Naive thymus-derived CD4-positive, alpha-beta T cell (primary cell): ENCODE measurements at regions of chr20 and their contacts with region 1.

Region 1: DNA sequence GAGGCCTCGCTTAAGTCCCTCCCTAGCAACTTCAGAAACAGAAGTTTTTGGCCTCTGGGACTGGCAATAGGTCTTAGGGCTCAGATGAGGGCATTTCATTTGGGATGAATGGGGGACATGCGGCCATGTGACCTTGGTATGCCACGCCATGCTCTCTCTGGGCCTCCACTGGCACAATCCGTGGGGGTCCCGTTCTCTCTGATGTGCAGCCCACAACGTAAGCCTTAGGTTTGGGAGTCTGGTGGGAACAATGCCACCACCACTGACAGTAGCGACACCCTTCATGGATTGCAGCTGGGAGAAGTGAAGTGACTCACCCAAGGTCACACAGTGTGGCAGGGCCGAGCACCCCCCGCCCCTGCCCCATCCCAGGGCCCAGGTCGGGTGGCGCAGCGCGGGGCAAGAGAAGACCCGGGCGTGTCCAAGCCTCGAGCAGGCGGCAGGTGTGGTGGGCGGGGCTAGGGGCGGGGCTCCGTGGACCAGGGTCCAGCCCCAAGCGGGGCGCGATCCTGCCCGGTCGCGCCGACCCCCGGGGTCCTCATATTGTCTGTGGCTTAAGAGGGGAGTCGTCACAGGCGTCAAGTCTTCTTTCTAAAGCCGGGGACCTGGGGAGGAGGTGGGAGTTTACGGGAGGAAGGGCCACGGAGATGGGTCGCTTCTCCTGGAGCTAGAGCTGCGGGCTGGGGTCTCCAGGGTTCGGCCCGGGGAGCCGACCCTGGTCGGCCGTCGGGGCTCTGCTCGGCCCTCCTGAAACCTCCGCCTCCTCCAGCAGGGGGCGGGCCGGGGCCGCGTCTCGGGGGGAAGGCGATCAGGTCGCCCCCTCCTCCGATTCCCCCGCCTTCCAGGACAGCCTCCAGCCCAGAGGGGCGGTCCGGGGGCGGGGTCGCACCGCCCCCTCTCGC is 698 bp upstream of the CEBPB start:
- DNase-seq: peak; percentile 73 to 92 (median 85)
- ATAC-seq: peak; percentile 84
- H3K4me3 ChIP-seq: peak overlapping the region; percentile 55
- H3K4me3 Mint-ChIP-seq: peak overlapping the region; percentile 25 to 93 (median 62)
- H3K27ac ChIP-seq: peak overlapping the region; percentile 77
- H3K27ac Mint-ChIP-seq: peak overlapping the region in 7 of 9 donors; percentile 16 to 71 (median 64)
- H3K4me1 ChIP-seq: peaks cover 11 to 21% of the 10 kb centered on the region in 2 donors
- H3K4me1 Mint-ChIP-seq: peaks cover 23 to 31% (median 26%) of the 10 kb centered on the region in 7 donors
- H3K27me3 ChIP-seq: no peaks in the 10 kb centered on the region
- H3K27me3 Mint-ChIP-seq: peaks cover 10 to 12% (median 11%) of the 10 kb centered on the region in 5 donors

Region 2: DNA sequence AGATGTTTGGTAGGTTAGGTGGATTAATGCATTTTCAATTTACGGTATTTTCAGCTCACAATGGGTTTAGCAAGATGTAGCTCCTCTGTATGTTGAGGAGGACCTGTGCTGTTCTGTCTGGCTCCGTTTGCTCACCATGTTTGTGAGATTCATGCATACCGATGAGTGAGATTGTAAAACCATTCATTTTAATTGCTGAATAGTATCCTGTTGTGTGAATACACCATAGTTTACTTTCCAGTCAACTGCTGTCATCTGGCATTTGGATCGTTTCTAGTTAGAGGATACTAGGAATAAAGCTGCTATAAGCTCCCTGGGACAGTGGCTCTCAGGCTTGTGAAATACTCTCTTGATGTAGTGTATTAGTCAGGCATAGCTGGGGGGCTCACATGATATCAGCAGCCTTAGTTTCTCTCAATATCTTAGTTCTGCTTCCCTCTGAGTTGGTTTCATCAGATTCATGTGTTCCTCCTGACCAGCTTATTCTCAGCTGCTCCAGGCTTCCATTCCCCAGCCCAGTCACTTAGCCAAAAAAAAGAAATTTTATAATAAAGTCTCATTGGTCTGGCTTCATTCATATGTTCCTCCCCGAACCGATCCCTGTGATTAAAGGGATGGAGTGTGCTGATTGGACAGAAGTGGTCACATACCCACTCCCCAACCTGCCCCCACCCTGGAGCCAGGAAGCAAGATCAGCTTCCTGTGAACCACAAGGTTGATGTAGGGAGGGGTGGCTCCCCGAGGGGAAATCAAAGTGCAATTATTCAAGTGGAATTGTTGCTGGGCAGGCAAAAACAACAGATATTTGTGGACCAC is 465.3 kb before region 1 on chr20:
- CTCF ChIA-PET with region 1: no interaction called
- POLR2A ChIA-PET with region 1: no interaction called
- intact Hi-C with region 1: no loop called
- DNase-seq: peak in 1 of 9 donors; percentile 11
- ATAC-seq: peak; percentile 77
- H3K4me3 ChIP-seq: no peak overlapping the region
- H3K4me3 Mint-ChIP-seq: peak overlapping the region in 2 of 10 donors; percentile 4 to 35
- H3K27ac ChIP-seq: no peak overlapping the region
- H3K27ac Mint-ChIP-seq: no peak overlapping the region
- H3K4me1 ChIP-seq: peaks cover 0 to 6% of the 10 kb centered on the region in 2 donors
- H3K4me1 Mint-ChIP-seq: peaks cover 8 to 18% (median 15%) of the 10 kb centered on the region in 7 donors
- H3K27me3 ChIP-seq: no peaks in the 10 kb centered on the region
- H3K27me3 Mint-ChIP-seq: peaks cover 0 to 7% (median 0%) of the 10 kb centered on the region in 5 donors

Region 3: DNA sequence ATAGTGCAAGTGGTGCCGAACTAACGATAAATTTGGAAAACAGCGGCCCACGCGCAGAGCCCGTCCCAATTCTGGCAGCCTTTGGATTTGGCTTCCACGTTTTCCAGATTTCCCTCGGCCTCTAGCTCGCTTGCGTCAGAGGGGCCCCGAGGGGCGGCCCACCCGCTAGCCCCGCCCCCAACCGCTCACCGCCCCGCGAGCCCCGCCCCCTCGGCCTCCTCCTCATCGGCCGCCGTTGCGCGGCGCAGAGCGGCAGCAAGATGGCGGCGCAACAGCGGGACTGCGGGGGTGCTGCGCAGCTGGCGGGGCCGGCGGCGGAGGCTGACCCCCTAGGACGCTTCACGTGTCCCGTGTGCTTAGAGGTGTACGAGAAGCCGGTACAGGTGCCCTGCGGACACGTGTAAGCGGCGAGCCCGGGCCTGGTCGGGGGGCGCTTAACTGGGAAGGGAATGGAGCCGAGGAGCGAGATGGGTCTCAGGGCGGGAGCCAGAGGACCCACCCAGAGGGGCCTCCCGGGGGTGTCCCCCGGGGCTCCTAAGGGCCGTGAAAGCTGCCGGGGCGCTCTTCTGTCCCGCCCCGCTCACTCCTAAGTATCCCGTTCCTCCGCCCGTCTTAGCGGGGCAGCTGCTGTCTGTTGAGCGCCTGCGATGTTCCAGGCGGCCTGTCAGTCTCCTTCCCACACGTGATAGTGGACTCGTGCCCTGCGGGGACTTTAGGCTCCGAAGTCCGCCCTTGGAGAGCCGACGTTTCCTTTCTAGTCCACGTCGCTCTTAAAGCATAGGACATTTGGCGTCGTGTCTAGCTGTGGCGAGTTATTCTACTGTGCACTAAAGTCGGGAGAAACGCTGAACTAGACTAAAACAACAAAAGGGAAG is 253.5 kb before region 1 on chr20 and contains the start of gene RNF114:
- CTCF ChIA-PET with region 1: no interaction called
- POLR2A ChIA-PET with region 1: no interaction called
- intact Hi-C with region 1: loop called in 1 of 2 experiments (anchors 2 kb)
- DNase-seq: peak; percentile 79 to 92 (median 86)
- ATAC-seq: peak; percentile 99
- H3K4me3 ChIP-seq: peak within 1 kb of the TSS; percentile 90
- H3K4me3 Mint-ChIP-seq: peak within 1 kb of the TSS; percentile 95 to 100 (median 98)
- H3K27ac ChIP-seq: peak within 1 kb of the TSS; percentile 95
- H3K27ac Mint-ChIP-seq: peak within 1 kb of the TSS; percentile 83 to 98 (median 95)
- H3K4me1 ChIP-seq: peaks cover 20 to 27% of the 10 kb centered on the region in 2 donors
- H3K4me1 Mint-ChIP-seq: peaks cover 36 to 61% (median 53%) of the 10 kb centered on the region in 7 donors
- H3K27me3 ChIP-seq: no peaks in the 10 kb centered on the region
- H3K27me3 Mint-ChIP-seq: no peaks in the 10 kb centered on the region
- total RNA-seq, gene RNF114: 67.1 to 113 (median 101) TPM

Region 4: DNA sequence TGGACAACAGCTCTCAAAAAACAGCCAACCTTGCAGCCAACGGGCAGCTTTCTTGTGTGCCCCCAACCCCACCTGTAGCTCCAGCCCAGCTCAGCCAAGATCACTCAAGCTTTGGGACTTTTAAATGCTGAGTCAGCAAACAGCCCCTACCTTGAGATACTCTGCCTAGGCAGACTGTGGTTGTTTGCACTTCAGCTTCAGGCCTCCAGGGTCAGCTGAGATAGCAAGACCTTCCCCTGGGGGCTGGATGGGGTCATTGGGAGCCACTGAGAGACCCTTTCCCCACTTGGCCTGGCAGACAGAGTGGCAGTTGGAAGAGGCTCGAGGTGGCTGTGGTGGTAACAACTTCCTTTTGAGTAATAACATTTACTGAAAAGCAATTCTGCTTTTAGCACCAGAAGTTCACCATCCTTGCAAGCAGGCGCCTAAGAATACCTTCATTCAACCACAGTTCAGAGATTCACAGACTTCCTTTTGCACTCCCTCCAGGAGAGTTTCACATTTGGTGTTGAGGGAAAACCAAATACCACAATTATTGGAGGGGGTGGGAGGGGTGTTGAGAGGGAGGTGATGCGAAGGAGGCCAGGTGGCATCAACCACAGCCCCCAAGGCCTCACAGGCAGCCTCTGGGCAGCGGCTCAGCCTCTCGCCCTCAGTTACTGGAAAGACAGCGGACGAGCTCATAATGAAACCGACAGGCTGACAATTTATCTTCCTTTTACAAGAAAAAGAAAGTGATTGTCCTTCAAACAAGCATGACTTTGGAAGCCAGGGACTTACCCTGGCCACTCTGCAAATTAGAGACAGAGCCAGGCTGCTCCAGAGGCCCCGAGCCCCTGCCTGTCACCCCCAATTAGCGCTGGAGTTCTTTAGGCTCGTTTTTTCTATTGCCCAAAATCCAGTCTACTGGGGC is 148.8 kb after region 1 on chr20:
- CTCF ChIA-PET with region 1: no interaction called
- POLR2A ChIA-PET with region 1: no interaction called
- intact Hi-C with region 1: loop called in 1 of 2 experiments (anchors 1 kb)
- DNase-seq: peak in 5 of 9 donors; percentile 5 to 74 (median 21)
- ATAC-seq: peak; percentile 73
- H3K4me3 ChIP-seq: peak overlapping the region; percentile 27
- H3K4me3 Mint-ChIP-seq: peak overlapping the region; percentile 34 to 79 (median 62)
- H3K27ac ChIP-seq: peak overlapping the region; percentile 18
- H3K27ac Mint-ChIP-seq: peak overlapping the region; percentile 51 to 94 (median 81)
- H3K4me1 ChIP-seq: peaks cover 13 to 20% of the 10 kb centered on the region in 2 donors
- H3K4me1 Mint-ChIP-seq: peaks cover 20 to 72% (median 25%) of the 10 kb centered on the region in 7 donors
- H3K27me3 ChIP-seq: no peaks in the 10 kb centered on the region
- H3K27me3 Mint-ChIP-seq: peaks cover 0 to 3% (median 0%) of the 10 kb centered on the region in 5 donors

Region 5: GRCh38 chr20:50372776-50373167 is 182.8 kb after region 1 on chr20:
- CTCF ChIA-PET with region 1: no interaction called
- POLR2A ChIA-PET with region 1: no interaction called
- intact Hi-C with region 1: no loop called
- DNase-seq: no peak
- ATAC-seq: no peak
- H3K4me3 ChIP-seq: no peak overlapping the region
- H3K4me3 Mint-ChIP-seq: no peak overlapping the region
- H3K27ac ChIP-seq: no peak overlapping the region
- H3K27ac Mint-ChIP-seq: no peak overlapping the region
- H3K4me1 ChIP-seq: no peaks in the 10 kb centered on the region
- H3K4me1 Mint-ChIP-seq: peaks cover 0 to 29% (median 5%) of the 10 kb centered on the region in 7 donors
- H3K27me3 ChIP-seq: no peaks in the 10 kb centered on the region
- H3K27me3 Mint-ChIP-seq: peaks cover 0 to 10% (median 5%) of the 10 kb centered on the region in 5 donors

Region 6: DNA sequence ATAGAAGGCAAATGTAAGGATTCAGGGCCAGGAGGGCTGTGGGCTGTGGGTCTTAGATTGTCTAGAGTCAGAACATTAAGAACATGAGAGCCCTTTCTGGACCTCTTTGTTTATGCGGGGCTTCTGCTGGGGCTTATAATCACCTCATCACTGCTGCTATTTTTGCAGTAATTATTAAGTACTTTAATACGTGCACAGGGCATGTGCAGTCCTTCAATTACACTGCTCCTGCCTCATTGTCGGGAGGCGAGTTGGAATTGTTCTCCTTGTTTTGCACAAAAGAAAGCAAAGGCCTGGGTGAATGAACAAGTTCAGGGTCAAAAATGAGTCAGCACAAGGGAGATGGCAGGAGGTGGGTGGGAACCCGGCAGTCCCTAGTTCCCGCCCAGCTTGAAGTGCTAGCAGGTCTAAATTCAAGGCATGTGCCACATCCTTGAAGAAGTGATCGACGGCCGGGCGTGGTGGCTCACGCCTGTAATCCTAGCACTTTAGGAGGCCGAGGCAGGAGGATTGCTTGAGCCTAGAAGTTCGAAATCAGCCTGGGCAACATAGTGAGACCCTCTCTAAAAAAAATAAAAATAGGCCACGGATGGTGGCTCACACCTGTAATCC is 285.9 kb after region 1 on chr20:
- CTCF ChIA-PET with region 1: no interaction called
- POLR2A ChIA-PET with region 1: no interaction called
- intact Hi-C with region 1: no loop called
- DNase-seq: no peak
- ATAC-seq: no peak
- H3K4me3 ChIP-seq: no peak overlapping the region
- H3K4me3 Mint-ChIP-seq: no peak overlapping the region
- H3K27ac ChIP-seq: no peak overlapping the region
- H3K27ac Mint-ChIP-seq: no peak overlapping the region
- H3K4me1 ChIP-seq: peaks cover 6 to 8% of the 10 kb centered on the region in 2 donors
- H3K4me1 Mint-ChIP-seq: peaks cover 0 to 34% (median 14%) of the 10 kb centered on the region in 7 donors
- H3K27me3 ChIP-seq: no peaks in the 10 kb centered on the region
- H3K27me3 Mint-ChIP-seq: no peaks in the 10 kb centered on the region

Region 7: GRCh38 chr20:50504231-50504823 is 314.4 kb after region 1 on chr20:
- CTCF ChIA-PET with region 1: no interaction called
- POLR2A ChIA-PET with region 1: interaction called, 6 read pairs
- intact Hi-C with region 1: loop called in 1 of 2 experiments (anchors 1 kb)
- DNase-seq: no peak
- ATAC-seq: peak; percentile 39
- H3K4me3 ChIP-seq: no peak overlapping the region
- H3K4me3 Mint-ChIP-seq: no peak overlapping the region
- H3K27ac ChIP-seq: no peak overlapping the region
- H3K27ac Mint-ChIP-seq: peak overlapping the region in 1 of 9 donors; percentile 60
- H3K4me1 ChIP-seq: no peaks in the 10 kb centered on the region
- H3K4me1 Mint-ChIP-seq: peaks cover 0 to 23% (median 8%) of the 10 kb centered on the region in 7 donors
- H3K27me3 ChIP-seq: no peaks in the 10 kb centered on the region
- H3K27me3 Mint-ChIP-seq: no peaks in the 10 kb centered on the region

Region 8: DNA sequence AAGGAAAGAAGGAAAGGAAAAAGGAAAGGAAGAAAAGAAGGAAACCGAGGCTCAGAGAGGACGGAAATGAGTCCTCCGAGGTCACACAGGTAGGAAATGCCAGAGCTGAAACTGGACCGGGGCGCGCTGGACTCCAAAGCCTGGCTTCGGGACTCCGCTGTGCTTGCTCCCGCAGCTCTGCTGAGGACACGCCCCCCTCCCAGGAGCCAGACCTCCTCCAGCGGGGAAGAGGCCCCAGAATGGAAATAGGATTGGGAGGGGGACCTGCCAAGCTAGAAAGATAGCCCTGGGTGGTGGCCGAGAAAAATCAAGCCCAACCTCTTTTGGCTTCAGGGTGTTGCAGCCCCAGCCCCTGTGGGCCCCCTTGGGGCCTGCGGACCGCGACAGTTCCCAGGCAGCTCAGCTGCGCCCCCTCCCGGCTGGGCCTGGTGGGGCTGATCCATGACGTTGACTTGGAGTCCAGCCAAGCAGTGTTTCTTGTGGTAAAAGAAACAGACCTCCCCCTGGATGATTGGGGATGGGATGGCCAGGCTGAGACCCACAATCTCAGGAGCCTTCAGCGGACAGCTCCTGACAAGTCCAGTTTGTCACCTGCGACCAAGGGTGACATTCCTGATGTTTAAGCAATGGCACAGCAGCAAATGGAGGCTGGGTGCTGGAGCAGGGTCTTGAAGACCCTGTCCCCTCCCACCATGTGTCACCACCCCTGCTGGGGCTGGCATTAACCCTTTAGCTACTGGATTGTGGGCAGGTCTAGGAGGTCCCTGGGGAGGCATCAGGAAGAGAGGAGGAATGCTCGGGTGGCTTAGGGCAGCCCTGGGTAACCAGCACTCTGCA is 446.0 kb after region 1 on chr20:
- CTCF ChIA-PET with region 1: no interaction called
- POLR2A ChIA-PET with region 1: no interaction called
- intact Hi-C with region 1: loop called (anchors 1 to 2 kb)
- DNase-seq: peak in 8 of 9 donors; percentile 13 to 66 (median 31)
- ATAC-seq: peak; percentile 69
- H3K4me3 ChIP-seq: no peak overlapping the region
- H3K4me3 Mint-ChIP-seq: no peak overlapping the region
- H3K27ac ChIP-seq: no peak overlapping the region
- H3K27ac Mint-ChIP-seq: no peak overlapping the region
- H3K4me1 ChIP-seq: no peaks in the 10 kb centered on the region
- H3K4me1 Mint-ChIP-seq: peaks cover 0 to 4% (median 0%) of the 10 kb centered on the region in 7 donors
- H3K27me3 ChIP-seq: no peaks in the 10 kb centered on the region
- H3K27me3 Mint-ChIP-seq: peaks cover 0 to 9% (median 0%) of the 10 kb centered on the region in 5 donors

Region 9: DNA sequence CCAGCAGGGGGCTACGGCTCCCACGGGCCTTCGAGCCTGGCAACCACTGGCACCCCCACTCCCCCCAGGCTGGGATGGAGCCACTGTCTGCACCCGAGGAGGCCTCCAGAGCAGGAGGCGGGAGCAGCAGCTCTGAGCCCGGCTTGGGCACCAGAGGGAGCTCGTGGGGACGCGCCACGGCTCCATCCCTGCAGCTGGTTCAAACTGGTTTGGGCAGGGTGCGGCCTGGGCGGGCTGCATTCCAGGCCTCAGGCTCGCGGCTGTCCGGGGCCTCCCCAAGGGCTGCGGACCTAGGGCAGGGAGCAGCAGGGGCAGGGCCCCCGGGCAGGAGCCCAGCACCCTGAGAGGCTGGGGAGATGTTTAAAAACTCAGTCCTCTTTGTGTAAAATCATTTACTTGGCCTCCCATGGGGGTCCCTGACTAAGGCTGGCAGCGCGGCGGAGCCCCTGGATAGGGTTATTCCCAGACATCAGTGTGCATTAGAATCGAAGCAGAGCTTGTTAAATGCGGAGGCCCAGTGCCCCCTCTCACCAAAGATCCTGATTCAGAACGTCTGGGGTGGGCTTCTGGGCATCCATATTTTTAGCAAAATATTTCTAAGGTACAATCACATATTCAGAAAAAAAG is 600.8 kb after region 1 on chr20:
- CTCF ChIA-PET with region 1: no interaction called
- POLR2A ChIA-PET with region 1: no interaction called
- intact Hi-C with region 1: loop called in 1 of 2 experiments (anchors 5 kb)
- DNase-seq: peak; percentile 62 to 80 (median 77)
- ATAC-seq: peak; percentile 68
- H3K4me3 ChIP-seq: peak overlapping the region; percentile 40
- H3K4me3 Mint-ChIP-seq: peak overlapping the region in 4 of 10 donors; percentile 27 to 63 (median 39)
- H3K27ac ChIP-seq: peak overlapping the region; percentile 69
- H3K27ac Mint-ChIP-seq: peak overlapping the region in 8 of 9 donors; percentile 63 to 86 (median 78)
- H3K4me1 ChIP-seq: peaks cover 11 to 16% of the 10 kb centered on the region in 2 donors
- H3K4me1 Mint-ChIP-seq: peaks cover 0 to 28% (median 15%) of the 10 kb centered on the region in 7 donors
- H3K27me3 ChIP-seq: no peaks in the 10 kb centered on the region
- H3K27me3 Mint-ChIP-seq: no peaks in the 10 kb centered on the region